ENCODE measurements at regions of chr6 and their contacts with region 1.

Region 1: GRCh38 chr6:166402582-166403277 is 20.0 kb upstream of the MPC1 start:
- DNase-seq: no peak
- ATAC-seq: no peak
- H3K4me3 Mint-ChIP-seq: no peak overlapping the region
- H3K27ac Mint-ChIP-seq: no peak overlapping the region
- H3K4me1 Mint-ChIP-seq: no peaks in the 10 kb centered on the region
- H3K27me3 Mint-ChIP-seq: peaks cover 2% of the 10 kb centered on the region
- CTCF ChIP-seq: no peak

Region 2: DNA sequence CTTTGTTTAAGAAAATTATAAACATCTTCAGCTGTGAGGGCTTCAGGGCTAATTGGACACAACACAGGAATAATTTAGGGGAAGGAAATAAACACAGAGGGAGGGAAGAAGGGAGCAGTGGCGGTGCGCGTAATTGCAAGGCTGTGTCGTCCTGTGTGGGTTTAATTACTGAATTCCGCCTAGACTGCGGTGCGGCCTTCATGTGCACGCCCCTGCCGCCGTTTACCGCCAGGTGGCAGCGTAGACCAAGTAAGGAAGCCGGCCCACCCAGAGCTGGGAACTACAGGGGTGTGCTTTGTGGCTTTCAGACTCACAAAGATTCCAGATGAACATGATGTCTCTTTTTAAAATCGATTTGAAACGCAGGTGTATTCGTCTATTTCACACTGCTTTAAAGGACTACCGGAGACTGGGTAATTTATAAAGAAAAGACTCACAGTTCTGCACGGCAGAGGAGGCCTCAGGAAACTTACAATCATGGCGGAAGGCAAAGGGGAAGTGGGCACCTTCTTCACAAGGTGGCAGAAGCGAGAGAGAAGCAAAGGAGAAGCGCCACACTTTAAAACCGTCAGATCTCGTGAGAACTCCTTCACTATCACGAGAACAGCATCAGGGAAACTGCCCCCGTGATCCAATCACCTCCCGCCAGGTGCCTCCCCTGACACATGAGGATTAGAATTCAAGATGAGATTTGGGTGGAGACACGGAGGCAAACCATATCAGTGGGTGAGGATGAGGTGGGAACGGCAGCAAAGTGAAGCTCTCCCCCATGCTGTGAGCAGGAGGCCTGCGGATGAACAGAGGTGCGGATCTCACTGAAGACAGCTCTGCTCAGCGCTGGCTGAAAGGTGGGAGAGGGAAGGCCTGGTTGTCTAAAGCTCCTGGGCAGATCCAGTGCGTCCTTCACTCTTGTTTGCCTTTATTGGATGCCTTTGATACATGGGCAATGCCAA is 517.6 kb before region 1 on chr6:
- CTCF ChIA-PET with region 1: interaction called, 15 read pairs
- POLR2A ChIA-PET with region 1: no interaction called
- intact Hi-C with region 1: loop called (anchors 1 kb)
- DNase-seq: peak; percentile 52
- ATAC-seq: peak; percentile 96
- H3K4me3 Mint-ChIP-seq: peak overlapping the region; percentile 66
- H3K27ac Mint-ChIP-seq: peak overlapping the region; percentile 80
- H3K4me1 Mint-ChIP-seq: peaks cover 11% of the 10 kb centered on the region
- H3K27me3 Mint-ChIP-seq: peaks cover 3% of the 10 kb centered on the region
- CTCF ChIP-seq: peak; percentile 37

Region 3: DNA sequence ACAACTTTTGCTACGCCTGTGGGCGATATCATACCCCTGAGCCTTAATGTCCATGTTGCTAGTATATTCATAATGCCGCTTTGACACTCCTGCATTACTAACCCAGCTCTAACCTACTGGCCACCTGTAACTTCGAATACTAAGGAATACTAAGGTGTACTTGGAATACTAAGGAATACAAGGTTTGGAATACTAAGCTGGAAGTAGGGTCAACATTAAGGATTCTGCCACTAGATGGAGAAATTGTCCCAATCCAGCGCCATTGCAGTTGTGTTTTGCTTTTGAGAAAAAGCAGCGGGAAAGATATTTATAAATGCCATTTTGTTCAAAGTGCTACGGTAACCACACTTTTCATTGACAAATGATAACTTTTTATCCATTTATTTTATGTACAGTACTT is 245.8 kb before region 1 on chr6:
- CTCF ChIA-PET with region 1: interaction called, 7 read pairs
- POLR2A ChIA-PET with region 1: no interaction called
- intact Hi-C with region 1: loop called (anchors 2 kb)
- DNase-seq: no peak
- ATAC-seq: no peak
- H3K4me3 Mint-ChIP-seq: no peak overlapping the region
- H3K27ac Mint-ChIP-seq: no peak overlapping the region
- H3K4me1 Mint-ChIP-seq: peaks cover 3% of the 10 kb centered on the region
- H3K27me3 Mint-ChIP-seq: peaks cover 23% of the 10 kb centered on the region
- CTCF ChIP-seq: no peak

Region 4: GRCh38 chr6:166281104-166281503 is 121.6 kb before region 1 on chr6:
- CTCF ChIA-PET with region 1: interaction called, 67 read pairs
- POLR2A ChIA-PET with region 1: interaction called, 3 read pairs
- intact Hi-C with region 1: no loop called
- DNase-seq: no peak
- ATAC-seq: no peak
- H3K4me3 Mint-ChIP-seq: no peak overlapping the region
- H3K27ac Mint-ChIP-seq: no peak overlapping the region
- H3K4me1 Mint-ChIP-seq: peaks cover 10% of the 10 kb centered on the region
- H3K27me3 Mint-ChIP-seq: peaks cover 11% of the 10 kb centered on the region
- CTCF ChIP-seq: no peak

Region 5: DNA sequence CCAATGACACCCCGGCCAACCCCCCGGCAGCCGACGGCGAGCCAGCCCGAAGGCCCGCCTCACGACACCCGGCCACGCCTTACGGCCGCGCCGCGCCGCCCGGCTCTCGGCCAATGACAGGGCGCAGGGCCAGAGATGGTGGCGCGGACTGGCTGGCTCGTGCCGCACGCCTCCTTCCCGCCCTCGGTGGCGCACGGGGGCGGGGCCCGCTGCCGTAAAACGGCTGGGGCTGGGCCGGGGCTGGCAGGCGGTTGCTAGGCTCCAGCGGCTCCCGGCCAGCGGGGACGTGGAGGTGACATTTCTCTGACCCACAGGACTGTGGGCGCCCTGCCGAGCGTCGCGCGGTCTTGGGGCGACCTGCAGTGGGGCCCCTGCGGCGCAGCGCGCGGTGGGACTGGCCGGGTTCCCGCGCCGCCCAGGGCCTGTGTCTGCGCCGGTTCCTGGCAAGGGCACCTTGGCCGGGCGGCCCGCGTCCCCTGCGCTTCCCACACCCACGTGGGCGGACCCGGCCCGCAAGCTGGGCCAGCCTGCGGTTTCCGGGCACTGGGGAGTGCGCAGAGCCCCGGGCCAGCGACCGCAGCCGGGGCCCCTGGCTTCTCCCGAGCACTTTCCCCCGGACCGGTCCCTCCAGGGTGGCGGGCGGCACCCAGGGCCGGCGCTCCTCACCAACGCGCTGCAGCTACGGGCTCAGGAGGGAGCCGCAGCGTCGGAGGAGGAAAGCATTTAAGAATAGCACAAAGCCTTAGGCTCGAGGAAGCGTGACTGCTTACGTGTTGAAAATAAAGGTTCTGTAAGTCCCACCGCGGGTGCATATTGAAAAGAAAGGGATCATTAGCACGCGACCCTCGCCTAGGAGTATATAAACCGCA is 19.6 kb before region 1 on chr6 and contains the start of gene MPC1:
- CTCF ChIA-PET with region 1: interaction called, 32 read pairs
- POLR2A ChIA-PET with region 1: no interaction called
- intact Hi-C with region 1: loop called (anchors 1 kb)
- DNase-seq: peak; percentile 96
- ATAC-seq: peak; percentile 94
- H3K4me3 Mint-ChIP-seq: peak within 1 kb of the TSS; percentile 92
- H3K27ac Mint-ChIP-seq: peak within 1 kb of the TSS; percentile 76
- H3K4me1 Mint-ChIP-seq: peaks cover 15% of the 10 kb centered on the region
- H3K27me3 Mint-ChIP-seq: no peaks in the 10 kb centered on the region
- CTCF ChIP-seq: no peak
- total RNA-seq, gene MPC1: 16.7 and 17.3 TPM in 2 replicates